Right lobe of liver (tissue), 6 donors: ENCODE measurements at regions of chr9 and their contacts with region 1.

Region 1: GRCh38 chr9:92716557-92716956 is 46.6 kb upstream of the IPPK start:
- DNase-seq: peak in 2 of 3 donors; percentile 54 to 67
- ATAC-seq: peak; percentile 55 to 76 (median 74)
- H3K4me3 ChIP-seq: no peak overlapping the region
- H3K27ac ChIP-seq: no peak overlapping the region
- H3K4me1 ChIP-seq: no peaks in the 10 kb centered on the region
- H3K27me3 ChIP-seq: no peaks in the 10 kb centered on the region
- CTCF ChIP-seq: peak; percentile 87 to 91 (median 89)
- POLR2A ChIP-seq: no peak

Region 2: GRCh38 chr9:92534674-92535073 is 181.9 kb before region 1 on chr9:
- intact Hi-C with region 1: no loop called
- DNase-seq: no peak
- ATAC-seq: peak; percentile 34 to 66 (median 36)
- H3K4me3 ChIP-seq: peak overlapping the region; percentile 4 to 36 (median 32)
- H3K27ac ChIP-seq: peak overlapping the region; percentile 53 to 88 (median 84)
- H3K4me1 ChIP-seq: peaks cover 0 to 32% (median 3%) of the 10 kb centered on the region in 4 donors
- H3K27me3 ChIP-seq: no peaks in the 10 kb centered on the region
- CTCF ChIP-seq: no peak
- POLR2A ChIP-seq: no peak

Region 3: DNA sequence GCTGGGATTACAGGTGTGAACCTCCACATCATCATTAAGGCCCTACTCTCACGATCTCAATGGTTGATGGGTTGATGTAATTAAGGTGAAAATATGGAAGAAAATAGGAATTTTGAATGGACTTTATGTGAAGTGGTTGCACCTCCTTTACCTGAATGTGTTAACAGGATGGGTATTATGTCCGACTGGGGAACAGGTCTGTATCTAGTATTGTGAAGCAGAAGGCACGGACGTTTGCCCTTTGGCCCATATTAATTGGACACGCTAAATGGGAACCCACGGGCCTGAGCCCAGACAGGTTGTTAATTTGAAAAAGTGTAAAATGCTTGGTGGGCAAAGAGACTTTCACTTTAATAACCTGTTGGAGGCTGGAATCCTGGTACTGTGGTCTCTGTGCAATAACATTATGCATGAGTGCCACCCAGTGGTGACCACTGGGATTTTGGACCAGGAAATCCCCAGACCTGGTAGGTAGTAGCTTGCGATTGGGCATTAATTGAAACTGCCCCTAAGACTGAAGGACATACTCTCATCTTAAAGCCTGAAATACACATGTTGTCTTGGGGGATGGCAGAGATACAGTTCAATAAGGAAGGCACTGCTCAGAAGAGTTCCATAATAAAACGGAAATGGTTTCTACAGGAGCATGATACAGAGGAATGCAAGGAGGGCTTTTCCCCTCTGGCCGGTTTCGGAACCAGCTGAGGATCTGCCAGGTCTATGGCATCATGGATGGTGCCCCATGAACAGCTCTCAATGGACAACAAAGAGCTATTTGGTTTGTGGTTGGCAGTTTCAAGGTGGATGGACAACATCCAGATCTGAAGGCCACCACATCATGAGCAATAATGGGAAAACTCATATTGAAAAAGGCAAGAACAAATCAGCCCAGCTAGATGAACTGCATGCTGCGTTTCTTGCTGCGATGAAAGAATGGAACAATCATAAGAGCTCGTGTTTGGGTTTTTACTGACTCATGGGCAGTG is 74.3 kb after region 1 on chr9:
- intact Hi-C with region 1: loop called (anchors 2 to 5 kb)
- DNase-seq: peak; percentile 70 to 75 (median 70)
- ATAC-seq: peak; percentile 97 to 98 (median 97)
- H3K4me3 ChIP-seq: no peak overlapping the region
- H3K27ac ChIP-seq: no peak overlapping the region
- H3K4me1 ChIP-seq: peaks cover 0 to 8% (median 3%) of the 10 kb centered on the region in 4 donors
- H3K27me3 ChIP-seq: no peaks in the 10 kb centered on the region
- CTCF ChIP-seq: peak; percentile 77 to 92 (median 82)
- POLR2A ChIP-seq: no peak